Posterior vena cava (tissue), 2 donors: ENCODE measurements at regions of chr1 and their contacts with region 1.

Region 1: DNA sequence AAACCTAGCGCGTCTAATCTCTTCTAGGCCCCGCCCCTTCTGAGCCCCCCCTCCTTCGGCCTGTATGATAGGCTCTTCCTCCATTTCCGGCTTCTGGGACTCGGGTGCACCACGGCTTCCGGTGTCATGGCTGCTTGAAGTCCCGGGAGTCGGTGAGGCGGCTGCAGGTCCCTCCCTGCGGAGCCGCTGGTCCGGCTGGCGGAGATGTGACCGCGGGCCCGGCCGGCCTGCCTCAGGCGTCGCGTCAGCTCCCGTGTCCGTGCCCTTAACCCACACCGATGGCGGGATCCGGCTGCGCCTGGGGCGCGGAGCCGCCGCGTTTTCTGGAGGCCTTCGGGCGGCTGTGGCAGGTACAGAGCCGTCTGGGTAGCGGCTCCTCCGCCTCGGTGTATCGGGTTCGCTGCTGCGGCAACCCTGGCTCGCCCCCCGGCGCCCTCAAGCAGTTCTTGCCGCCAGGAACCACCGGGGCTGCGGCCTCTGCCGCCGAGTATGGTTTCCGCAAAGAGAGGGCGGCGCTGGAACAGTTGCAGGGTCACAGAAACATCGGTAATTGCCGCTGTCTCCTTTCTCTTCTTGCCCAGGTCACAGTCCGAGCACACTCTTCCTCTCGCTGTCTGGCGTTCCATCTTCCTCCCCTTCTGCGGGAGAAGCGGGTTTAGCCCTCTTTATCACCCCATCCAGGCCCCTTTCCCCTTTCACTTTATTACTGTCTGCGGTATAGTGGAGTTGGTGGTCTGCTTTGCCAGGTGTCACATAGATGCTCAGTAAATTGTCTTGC is at the start of gene UHMK1:
- DNase-seq: peak; percentile 96
- total RNA-seq, gene UHMK1: 27.5 to 36.2 TPM

Region 2: DNA sequence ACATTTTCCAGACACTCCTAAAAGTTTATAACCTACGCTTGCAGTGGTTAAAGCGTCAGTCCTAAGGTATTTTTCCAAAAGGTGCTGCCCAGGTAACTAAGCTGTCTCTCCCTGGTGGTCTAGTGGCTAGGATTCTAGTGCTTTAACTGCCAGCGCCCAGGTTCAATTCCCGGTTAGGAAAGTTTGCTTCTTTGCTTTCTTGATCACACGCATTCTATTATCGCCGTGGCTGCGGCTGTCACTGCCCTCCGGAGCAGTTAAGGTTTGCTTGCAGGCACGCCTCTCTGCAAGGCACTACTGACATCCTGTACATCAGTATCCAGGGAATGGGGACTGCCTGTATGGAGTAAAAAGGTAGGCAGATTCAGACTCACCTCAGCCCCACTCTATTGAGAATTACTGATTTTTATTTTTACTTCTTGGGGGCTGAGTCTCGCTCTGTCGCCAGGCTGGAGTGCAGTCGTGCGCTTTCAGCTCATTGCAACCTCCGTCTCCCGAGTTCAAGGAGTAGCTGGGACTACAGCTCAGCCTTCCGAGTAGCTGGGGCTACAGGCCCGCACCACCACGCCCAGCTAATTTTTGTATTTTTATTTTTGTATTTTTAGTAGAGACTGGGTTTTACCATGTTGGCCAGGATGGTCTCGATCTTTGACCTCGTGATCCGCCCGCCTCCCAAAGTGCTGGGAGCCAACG is 1077.0 kb before region 1 on chr1:
- intact Hi-C with region 1: loop called in 1 of 2 experiments (anchors 10 kb)
- DNase-seq: no peak

Region 3: GRCh38 chr1:162458236-162458635 is 39.7 kb before region 1 on chr1:
- intact Hi-C with region 1: no loop called
- DNase-seq: no peak

Region 4: GRCh38 chr1:162561037-162561616 is 63.2 kb after region 1 on chr1:
- intact Hi-C with region 1: no loop called
- DNase-seq: peak; percentile 100

Region 5: DNA sequence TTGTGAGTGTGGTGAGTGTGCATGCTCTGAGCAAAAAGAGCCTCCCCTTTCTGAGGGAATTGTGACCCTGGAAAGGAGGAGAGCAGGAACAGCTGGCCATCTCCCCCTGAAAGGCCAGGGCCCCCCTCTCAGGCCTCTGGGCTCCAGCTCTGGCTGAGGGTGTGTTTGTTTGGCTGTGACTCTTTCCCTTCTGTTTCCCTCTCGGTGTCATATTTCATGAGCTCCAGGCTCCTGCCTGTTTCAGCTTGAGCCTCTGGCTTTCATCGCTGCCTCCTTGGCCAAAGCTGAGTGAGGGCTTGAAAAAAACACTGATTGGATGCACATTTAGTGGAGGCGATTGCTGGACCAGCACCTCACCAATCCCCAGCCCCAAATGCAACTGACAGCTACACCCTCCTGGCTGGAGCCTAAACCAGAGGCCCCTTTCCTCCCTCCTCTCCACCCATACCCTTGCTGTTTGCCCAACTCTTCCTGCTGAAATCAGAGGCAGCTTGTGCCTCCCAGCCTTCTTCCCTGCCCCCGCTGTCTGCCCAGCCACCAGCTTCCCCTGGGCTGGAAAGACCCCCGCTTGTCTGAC is 198.5 kb after region 1 on chr1:
- intact Hi-C with region 1: no loop called
- DNase-seq: peak; percentile 84